ENCODE measurements at regions of chr2 and their contacts with region 1.

Region 1: GRCh38 chr2:55961318-55961911 is 37.8 kb upstream of the EFEMP1 start:
- DNase-seq: no peak
- H3K4me3 ChIP-seq: no peak overlapping the region
- H3K27ac ChIP-seq: no peak overlapping the region
- H3K4me1 ChIP-seq: peaks cover 7 to 8% of the 10 kb centered on the region in 2 donors
- H3K27me3 ChIP-seq: no peaks in the 10 kb centered on the region
- CTCF ChIP-seq: peak; percentile 37 to 72 (median 61)

Region 2: GRCh38 chr2:55452879-55453278 is 508.5 kb before region 1 on chr2:
- intact Hi-C with region 1: no loop called
- DNase-seq: no peak
- H3K4me3 ChIP-seq: no peak overlapping the region
- H3K27ac ChIP-seq: no peak overlapping the region
- H3K4me1 ChIP-seq: no peaks in the 10 kb centered on the region
- H3K27me3 ChIP-seq: no peaks in the 10 kb centered on the region
- CTCF ChIP-seq: no peak

Region 3: DNA sequence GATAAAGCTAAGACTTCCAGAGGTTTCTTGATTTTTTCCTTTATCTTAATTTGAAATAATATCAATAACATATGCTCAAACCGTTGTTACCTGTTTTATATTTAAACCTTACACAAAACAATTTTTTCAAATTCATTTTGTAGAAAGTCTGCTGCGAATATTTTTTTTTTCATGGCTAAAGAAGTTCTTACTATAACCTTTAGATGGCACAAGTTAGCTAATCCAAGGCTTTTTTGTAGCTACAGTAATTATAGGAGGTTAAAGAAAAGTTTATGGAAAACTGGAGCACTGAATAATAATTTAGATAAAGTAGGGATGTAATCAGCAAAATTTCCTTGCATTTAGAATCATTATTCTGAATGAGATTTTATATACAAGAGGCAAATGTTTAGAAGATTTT is 189.8 kb before region 1 on chr2:
- intact Hi-C with region 1: loop called (anchors 1 kb)
- DNase-seq: no peak
- H3K4me3 ChIP-seq: no peak overlapping the region
- H3K27ac ChIP-seq: no peak overlapping the region
- H3K4me1 ChIP-seq: peaks cover 0 to 3% of the 10 kb centered on the region in 2 donors
- H3K27me3 ChIP-seq: no peaks in the 10 kb centered on the region
- CTCF ChIP-seq: peak; percentile 45 to 87 (median 77)

Region 4: DNA sequence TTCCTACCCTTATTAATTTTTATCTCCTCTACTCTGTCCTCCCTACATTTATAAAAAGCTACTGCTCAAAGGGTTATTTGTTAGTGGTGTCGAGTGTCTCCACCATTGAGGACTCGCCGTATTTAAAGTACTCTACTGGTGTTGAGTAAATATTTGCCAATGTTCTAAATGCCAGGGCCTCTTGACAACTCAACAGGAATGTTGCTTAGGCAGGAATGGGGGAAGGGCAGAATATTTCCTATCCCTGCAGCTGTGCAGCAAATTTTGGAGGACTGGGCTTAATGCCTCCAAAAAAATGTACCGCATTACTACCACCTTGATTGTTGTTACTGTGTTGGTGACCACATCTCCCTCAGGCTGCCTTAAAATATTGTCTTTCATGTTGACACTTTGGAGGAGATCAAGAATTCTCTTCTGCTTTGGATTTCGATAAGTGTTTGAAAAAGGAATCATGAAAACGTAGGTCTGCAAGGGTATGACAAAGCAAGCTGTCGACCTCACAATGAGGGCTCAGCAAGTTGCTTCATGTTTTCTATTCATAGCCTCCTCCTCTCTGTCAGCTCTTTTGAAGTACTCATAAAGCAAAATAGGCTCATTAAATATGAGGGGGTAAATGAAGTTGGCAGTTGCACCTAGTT is 122.1 kb before region 1 on chr2:
- intact Hi-C with region 1: no loop called
- DNase-seq: no peak
- H3K4me3 ChIP-seq: no peak overlapping the region
- H3K27ac ChIP-seq: no peak overlapping the region
- H3K4me1 ChIP-seq: peaks cover 0 to 2% of the 10 kb centered on the region in 2 donors
- H3K27me3 ChIP-seq: no peaks in the 10 kb centered on the region
- CTCF ChIP-seq: no peak